ENCODE measurements at regions of chr11 and their contacts with region 1.

Region 1: DNA sequence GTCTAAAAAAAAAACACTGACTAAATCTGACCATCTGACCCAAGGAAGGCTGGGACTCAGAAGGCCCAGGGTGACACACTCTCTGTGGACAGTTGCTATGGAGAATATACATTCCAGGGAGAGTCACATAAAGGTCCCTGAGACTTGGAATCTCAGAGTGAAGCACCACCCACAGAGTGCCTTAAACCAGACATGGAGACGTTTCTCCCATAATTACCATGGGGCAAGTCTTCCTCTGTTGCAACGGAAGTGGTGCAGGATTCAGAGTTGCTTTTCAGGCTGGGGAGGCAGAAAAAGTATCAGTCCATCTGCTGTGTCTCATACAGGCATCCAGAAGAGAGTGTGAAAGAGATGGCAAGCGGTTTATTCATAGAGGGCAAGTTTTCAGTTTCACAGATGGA is 58.7 kb upstream of the SLN start:
- DNase-seq: no peak
- ATAC-seq: no peak
- H3K4me3 ChIP-seq: no peak overlapping the region
- H3K27ac ChIP-seq: no peak overlapping the region
- H3K4me1 ChIP-seq: no peaks in the 10 kb centered on the region
- H3K27me3 ChIP-seq: peaks cover 0 to 4% (median 0%) of the 10 kb centered on the region in 9 donors
- CTCF ChIP-seq: no peak
- POLR2A ChIP-seq: no peak

Region 2: DNA sequence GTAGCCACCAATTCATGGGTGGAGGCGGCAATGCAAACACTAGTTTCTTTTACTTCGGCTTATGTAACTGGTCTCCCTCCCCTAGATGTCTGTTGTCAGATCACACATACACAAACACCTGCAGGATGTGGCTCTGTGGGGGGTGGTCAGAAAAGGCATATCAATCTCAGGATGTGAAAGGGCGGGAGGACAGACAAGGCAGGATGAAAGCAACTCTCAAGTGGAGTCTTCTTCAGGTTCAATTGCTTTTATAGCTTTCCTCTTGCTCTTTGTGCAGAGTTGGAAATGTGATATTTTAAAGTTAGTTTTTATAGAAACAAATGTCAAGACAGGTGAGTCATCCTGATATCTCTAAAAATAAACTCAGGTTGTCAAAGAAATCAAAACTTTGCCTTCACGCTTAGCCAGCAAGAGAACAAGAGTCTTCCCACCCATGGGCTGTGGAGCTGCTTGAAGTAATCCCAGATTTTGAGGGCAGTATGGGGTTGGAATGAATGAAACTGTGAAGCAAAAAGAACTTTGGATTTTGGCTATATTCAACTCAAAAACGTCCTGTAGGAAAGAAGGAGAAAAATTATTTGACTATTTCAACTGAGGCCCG is 1175.7 kb before region 1 on chr11:
- intact Hi-C with region 1: no loop called
- DNase-seq: no peak
- ATAC-seq: no peak
- H3K4me3 ChIP-seq: no peak overlapping the region
- H3K27ac ChIP-seq: no peak overlapping the region
- H3K4me1 ChIP-seq: no peaks in the 10 kb centered on the region
- H3K27me3 ChIP-seq: no peaks in the 10 kb centered on the region
- CTCF ChIP-seq: no peak
- POLR2A ChIP-seq: no peak

Region 3: GRCh38 chr11:107549253-107549953 is 221.1 kb before region 1 on chr11:
- intact Hi-C with region 1: loop called in 2 of 10 experiments (anchors 2 to 10 kb)
- DNase-seq: no peak
- ATAC-seq: peak in 1 of 4 donors; percentile 50
- H3K4me3 ChIP-seq: no peak overlapping the region
- H3K27ac ChIP-seq: no peak overlapping the region
- H3K4me1 ChIP-seq: no peaks in the 10 kb centered on the region
- H3K27me3 ChIP-seq: no peaks in the 10 kb centered on the region
- CTCF ChIP-seq: peak; percentile 67 to 91 (median 85)
- POLR2A ChIP-seq: no peak

Region 4: GRCh38 chr11:107830915-107831540 is 60.5 kb after region 1 on chr11:
- intact Hi-C with region 1: no loop called
- DNase-seq: no peak
- ATAC-seq: no peak
- H3K4me3 ChIP-seq: no peak overlapping the region
- H3K27ac ChIP-seq: no peak overlapping the region
- H3K4me1 ChIP-seq: no peaks in the 10 kb centered on the region
- H3K27me3 ChIP-seq: no peaks in the 10 kb centered on the region
- CTCF ChIP-seq: no peak
- POLR2A ChIP-seq: no peak

Region 5: GRCh38 chr11:107951155-107951554 is 180.6 kb after region 1 on chr11:
- intact Hi-C with region 1: no loop called
- DNase-seq: no peak
- ATAC-seq: no peak
- H3K4me3 ChIP-seq: no peak overlapping the region
- H3K27ac ChIP-seq: no peak overlapping the region
- H3K4me1 ChIP-seq: peaks cover 0 to 3% (median 0%) of the 10 kb centered on the region in 12 donors
- H3K27me3 ChIP-seq: no peaks in the 10 kb centered on the region
- CTCF ChIP-seq: no peak
- POLR2A ChIP-seq: no peak

Measured in heart left ventricle (tissue), 16 donors.